CD4-positive, alpha-beta memory T cell (primary cell): ENCODE measurements at regions of chr16 and their contacts with region 1.

Region 1: DNA sequence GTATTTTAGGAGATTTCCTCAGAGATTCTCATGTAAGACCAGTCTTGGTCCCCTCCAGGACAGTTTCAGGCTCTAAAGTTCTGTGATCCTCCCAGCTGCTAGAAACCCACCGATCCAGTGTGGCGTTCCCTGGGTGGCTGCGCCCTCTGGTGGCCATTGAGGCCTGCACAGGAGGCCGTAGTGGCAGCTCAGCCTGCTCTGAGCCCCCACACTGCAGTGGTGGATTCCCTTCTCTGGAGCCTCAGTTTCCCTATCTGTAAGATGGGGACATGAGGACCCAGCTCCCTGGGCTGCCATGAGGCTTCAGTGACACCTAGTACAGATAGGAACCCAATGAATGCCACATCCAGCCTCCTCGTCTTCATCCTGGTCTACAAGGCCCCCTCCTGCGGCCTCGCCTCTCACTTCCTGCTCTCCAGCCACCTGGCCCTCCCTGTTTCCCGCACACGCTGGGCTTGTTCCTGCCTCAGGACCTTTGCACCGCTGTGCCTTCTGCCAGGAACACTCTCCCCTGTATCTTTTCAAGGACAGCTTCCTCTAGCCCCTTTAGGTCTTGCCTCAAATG is 16.5 kb downstream of the CCDC102A start:
- DNase-seq: peak; percentile 70 to 76 (median 72)
- H3K4me3 ChIP-seq: no peak overlapping the region
- H3K4me3 Mint-ChIP-seq: no peak overlapping the region
- H3K27ac ChIP-seq: no peak overlapping the region
- H3K27ac Mint-ChIP-seq: peak overlapping the region in 1 of 7 donors; percentile 2
- H3K4me1 ChIP-seq: no peaks in the 10 kb centered on the region
- H3K4me1 Mint-ChIP-seq: peaks cover 0 to 6% (median 3%) of the 10 kb centered on the region in 4 donors
- H3K27me3 ChIP-seq: no peaks in the 10 kb centered on the region
- H3K27me3 Mint-ChIP-seq: no peaks in the 10 kb centered on the region

Region 2: DNA sequence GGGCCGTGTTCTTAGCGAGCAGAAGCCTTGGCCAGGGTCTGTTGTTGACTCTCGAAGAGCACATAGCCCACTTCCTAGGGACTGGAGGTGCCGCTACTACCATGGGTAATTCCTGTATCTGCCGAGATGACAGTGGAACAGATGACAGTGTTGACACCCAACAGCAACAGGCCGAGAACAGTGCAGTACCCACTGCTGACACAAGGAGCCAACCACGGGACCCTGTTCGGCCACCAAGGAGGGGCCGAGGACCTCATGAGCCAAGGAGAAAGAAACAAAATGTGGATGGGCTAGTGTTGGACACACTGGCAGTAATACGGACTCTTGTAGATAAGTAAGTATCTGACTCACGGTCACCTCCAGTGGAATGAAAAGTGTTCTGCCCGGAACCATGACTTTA is 315.2 kb before region 1 on chr16:
- CTCF ChIA-PET with region 1: no interaction called
- POLR2A ChIA-PET with region 1: no interaction called
- intact Hi-C with region 1: no loop called
- DNase-seq: no peak
- H3K4me3 ChIP-seq: no peak overlapping the region
- H3K4me3 Mint-ChIP-seq: no peak overlapping the region
- H3K27ac ChIP-seq: no peak overlapping the region
- H3K27ac Mint-ChIP-seq: no peak overlapping the region
- H3K4me1 ChIP-seq: no peaks in the 10 kb centered on the region
- H3K4me1 Mint-ChIP-seq: peaks cover 0 to 7% (median 5%) of the 10 kb centered on the region in 4 donors
- H3K27me3 ChIP-seq: no peaks in the 10 kb centered on the region
- H3K27me3 Mint-ChIP-seq: no peaks in the 10 kb centered on the region

Region 3: DNA sequence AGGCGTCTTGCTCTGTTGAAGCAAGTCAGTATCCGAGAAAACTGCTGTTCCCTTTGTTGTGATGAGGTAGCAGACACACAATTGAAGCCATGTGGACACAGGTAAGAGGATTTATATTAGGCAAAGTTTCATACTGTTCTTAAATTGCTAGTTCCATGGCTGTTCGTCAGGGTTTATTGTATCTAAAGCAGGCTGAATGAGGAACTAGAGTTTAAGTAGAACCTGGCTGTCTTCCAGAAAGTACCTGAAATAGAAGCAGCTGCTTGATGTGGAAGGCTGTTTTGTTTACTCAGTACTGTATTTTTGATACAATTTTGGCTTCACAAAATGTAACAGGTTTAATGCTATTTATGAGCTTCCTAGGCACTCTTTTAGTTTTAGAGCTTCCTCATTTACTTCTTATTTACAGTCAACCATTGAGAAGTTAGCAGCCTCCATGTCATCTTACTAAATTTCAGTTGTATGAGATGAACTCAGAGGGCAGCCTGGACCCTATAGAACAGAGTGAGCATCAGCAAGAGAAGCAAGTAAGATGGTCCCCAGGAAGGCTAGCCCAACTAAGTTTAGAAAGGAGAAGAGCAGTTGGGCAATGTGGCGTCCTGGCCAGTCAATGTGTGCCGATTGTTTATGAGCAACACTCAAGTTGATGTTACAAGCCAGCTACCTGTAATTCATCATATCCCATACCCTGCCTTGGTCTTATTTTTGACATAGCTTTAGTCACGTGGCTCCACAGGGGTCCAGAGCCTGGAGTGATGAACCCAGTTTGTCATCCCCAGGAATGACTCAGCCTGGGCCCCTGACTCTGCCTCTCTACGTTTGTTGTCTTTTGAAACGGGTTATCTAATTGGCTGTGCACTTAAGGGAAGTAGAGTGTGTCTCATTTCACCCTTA is 284.5 kb before region 1 on chr16:
- CTCF ChIA-PET with region 1: no interaction called
- POLR2A ChIA-PET with region 1: no interaction called
- intact Hi-C with region 1: no loop called
- DNase-seq: no peak
- H3K4me3 ChIP-seq: no peak overlapping the region
- H3K4me3 Mint-ChIP-seq: no peak overlapping the region
- H3K27ac ChIP-seq: no peak overlapping the region
- H3K27ac Mint-ChIP-seq: peak overlapping the region in 4 of 7 donors; percentile 14 to 46 (median 28)
- H3K4me1 ChIP-seq: no peaks in the 10 kb centered on the region
- H3K4me1 Mint-ChIP-seq: no peaks in the 10 kb centered on the region
- H3K27me3 ChIP-seq: no peaks in the 10 kb centered on the region
- H3K27me3 Mint-ChIP-seq: no peaks in the 10 kb centered on the region

Region 4: DNA sequence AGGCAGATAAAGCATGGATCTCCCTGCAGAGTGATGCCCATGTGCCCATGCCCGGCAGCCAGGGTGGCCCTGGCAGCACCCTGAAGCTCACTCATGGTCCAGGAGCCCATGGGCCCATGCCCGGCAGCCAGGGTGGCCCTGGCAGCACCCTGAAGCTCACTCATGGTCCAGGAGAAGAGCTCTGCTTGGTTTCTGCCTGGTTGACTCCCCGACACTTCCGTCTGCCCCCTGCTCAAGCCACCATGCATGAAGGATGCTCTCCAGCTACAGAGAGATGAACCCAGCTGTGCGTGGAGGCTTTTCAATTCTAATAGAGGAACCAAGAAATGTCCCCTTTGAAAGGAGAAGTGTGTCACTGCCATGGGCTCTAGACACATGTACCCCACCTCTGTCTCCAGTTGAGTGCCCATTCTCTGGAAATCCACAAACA is 106.6 kb before region 1 on chr16:
- CTCF ChIA-PET with region 1: interaction called, 87 read pairs
- POLR2A ChIA-PET with region 1: interaction called, 3 read pairs
- intact Hi-C with region 1: no loop called
- DNase-seq: no peak
- H3K4me3 ChIP-seq: no peak overlapping the region
- H3K4me3 Mint-ChIP-seq: no peak overlapping the region
- H3K27ac ChIP-seq: no peak overlapping the region
- H3K27ac Mint-ChIP-seq: no peak overlapping the region
- H3K4me1 ChIP-seq: peaks cover 7% of the 10 kb centered on the region
- H3K4me1 Mint-ChIP-seq: peaks cover 6 to 13% (median 7%) of the 10 kb centered on the region in 4 donors
- H3K27me3 ChIP-seq: no peaks in the 10 kb centered on the region
- H3K27me3 Mint-ChIP-seq: peaks cover 1 to 6% of the 10 kb centered on the region in 2 donors

Region 5: GRCh38 chr16:57462209-57462977 is 57.5 kb before region 1 on chr16 and contains the start of gene POLR2C:
- CTCF ChIA-PET with region 1: interaction called, 10 read pairs
- POLR2A ChIA-PET with region 1: interaction called, 8 read pairs
- intact Hi-C with region 1: loop called (anchors 5 kb)
- DNase-seq: peak; percentile 89 to 93 (median 90)
- H3K4me3 ChIP-seq: peak within 1 kb of the TSS; percentile 81 to 87
- H3K4me3 Mint-ChIP-seq: peak within 1 kb of the TSS; percentile 98 to 100 (median 100)
- H3K27ac ChIP-seq: peak within 1 kb of the TSS; percentile 69
- H3K27ac Mint-ChIP-seq: peak within 1 kb of the TSS; percentile 96 to 100 (median 99)
- H3K4me1 ChIP-seq: peaks cover 36% of the 10 kb centered on the region
- H3K4me1 Mint-ChIP-seq: peaks cover 16 to 43% (median 34%) of the 10 kb centered on the region in 4 donors
- H3K27me3 ChIP-seq: no peaks in the 10 kb centered on the region
- H3K27me3 Mint-ChIP-seq: no peaks in the 10 kb centered on the region
- total RNA-seq, gene POLR2C: 71.4 to 78.1 TPM

Region 6: GRCh38 chr16:57475711-57476339 is 44.1 kb before region 1 on chr16:
- CTCF ChIA-PET with region 1: interaction called, 14 read pairs
- POLR2A ChIA-PET with region 1: no interaction called
- intact Hi-C with region 1: loop called (anchors 1 kb)
- DNase-seq: peak; percentile 66 to 82 (median 75)
- H3K4me3 ChIP-seq: no peak overlapping the region
- H3K4me3 Mint-ChIP-seq: peak overlapping the region in 5 of 8 donors; percentile 5 to 69 (median 59)
- H3K27ac ChIP-seq: no peak overlapping the region
- H3K27ac Mint-ChIP-seq: peak overlapping the region in 4 of 7 donors; percentile 74 to 79 (median 76)
- H3K4me1 ChIP-seq: peaks cover 17% of the 10 kb centered on the region
- H3K4me1 Mint-ChIP-seq: peaks cover 7 to 12% (median 10%) of the 10 kb centered on the region in 4 donors
- H3K27me3 ChIP-seq: no peaks in the 10 kb centered on the region
- H3K27me3 Mint-ChIP-seq: no peaks in the 10 kb centered on the region

Region 7: DNA sequence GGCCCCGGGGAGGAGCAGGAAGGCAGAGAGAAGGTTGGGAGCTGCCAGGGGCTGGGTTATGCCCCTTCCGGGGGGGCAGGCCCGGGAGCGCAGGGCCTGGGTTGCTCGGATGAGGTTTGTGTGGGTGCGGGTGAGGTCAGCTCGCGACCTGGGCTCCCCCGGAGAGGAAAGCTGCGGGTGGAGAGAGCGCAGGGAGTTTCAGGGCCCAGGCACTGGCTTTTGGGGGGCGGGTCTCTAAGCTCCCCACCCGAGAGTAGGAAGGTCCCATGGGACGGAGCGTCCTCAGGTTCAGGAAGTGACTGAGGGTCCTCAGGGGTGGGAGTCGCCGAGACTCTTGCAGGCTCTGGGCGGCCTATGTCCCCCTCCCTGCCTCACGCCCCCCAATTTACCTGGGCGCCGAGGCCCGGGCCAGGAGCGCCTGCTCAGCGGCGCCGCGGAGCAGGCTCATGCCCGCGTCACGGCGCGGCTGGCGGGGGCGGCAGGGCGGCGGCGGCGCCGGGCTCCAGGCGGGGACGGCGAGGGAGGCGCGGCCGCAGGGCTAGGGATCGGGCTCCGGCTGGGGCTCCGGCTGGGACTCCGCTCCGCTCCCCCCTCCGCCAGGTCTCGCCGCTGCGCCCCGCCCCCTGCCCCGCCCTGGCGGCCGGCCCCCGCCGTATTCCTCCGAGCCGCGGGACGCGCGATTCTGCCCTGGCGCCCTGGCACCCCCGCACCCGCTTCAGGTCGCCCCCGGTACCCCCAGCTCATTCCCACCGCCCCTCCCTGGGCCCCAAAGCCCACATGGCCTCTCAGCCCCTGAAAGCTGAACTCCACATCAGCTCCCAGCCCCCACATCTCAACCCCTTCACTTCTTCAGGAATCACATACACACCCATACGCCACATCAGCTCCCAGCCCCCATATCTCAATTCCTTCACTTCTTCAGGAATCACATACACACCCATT is 33.7 kb before region 1 on chr16 and contains the start of gene DOK4:
- CTCF ChIA-PET with region 1: interaction called, 22 read pairs
- POLR2A ChIA-PET with region 1: no interaction called
- intact Hi-C with region 1: no loop called
- DNase-seq: peak; percentile 65 to 72 (median 69)
- H3K4me3 ChIP-seq: peak within 1 kb of the TSS in 1 of 2 donors; percentile 55
- H3K4me3 Mint-ChIP-seq: peak within 1 kb of the TSS; percentile 82 to 90 (median 86)
- H3K27ac ChIP-seq: peak within 1 kb of the TSS; percentile 36
- H3K27ac Mint-ChIP-seq: peak within 1 kb of the TSS in 5 of 7 donors; percentile 44 to 81 (median 77)
- H3K4me1 ChIP-seq: peaks cover 17% of the 10 kb centered on the region
- H3K4me1 Mint-ChIP-seq: peaks cover 11 to 27% (median 21%) of the 10 kb centered on the region in 4 donors
- H3K27me3 ChIP-seq: no peaks in the 10 kb centered on the region
- H3K27me3 Mint-ChIP-seq: no peaks in the 10 kb centered on the region
- total RNA-seq, gene DOK4: 2.8 to 3.0 TPM

Region 8: GRCh38 chr16:57530104-57530521 is 10.2 kb after region 1 on chr16:
- CTCF ChIA-PET with region 1: interaction called, 28 read pairs
- POLR2A ChIA-PET with region 1: interaction called, 15 read pairs
- intact Hi-C with region 1: no loop called
- DNase-seq: peak; percentile 59 to 90 (median 63)
- H3K4me3 ChIP-seq: peak overlapping the region in 1 of 2 donors; percentile 42
- H3K4me3 Mint-ChIP-seq: peak overlapping the region; percentile 67 to 89 (median 82)
- H3K27ac ChIP-seq: peak overlapping the region; percentile 60
- H3K27ac Mint-ChIP-seq: peak overlapping the region; percentile 92 to 97 (median 96)
- H3K4me1 ChIP-seq: peaks cover 59% of the 10 kb centered on the region
- H3K4me1 Mint-ChIP-seq: peaks cover 49 to 60% (median 54%) of the 10 kb centered on the region in 4 donors
- H3K27me3 ChIP-seq: no peaks in the 10 kb centered on the region
- H3K27me3 Mint-ChIP-seq: no peaks in the 10 kb centered on the region

Region 9: GRCh38 chr16:57535680-57536305 is 15.9 kb after region 1 on chr16:
- CTCF ChIA-PET with region 1: interaction called, 28 read pairs
- POLR2A ChIA-PET with region 1: interaction called, 15 read pairs
- intact Hi-C with region 1: no loop called
- DNase-seq: peak; percentile 89 to 95 (median 93)
- H3K4me3 ChIP-seq: peak overlapping the region in 1 of 2 donors; percentile 51
- H3K4me3 Mint-ChIP-seq: peak overlapping the region; percentile 80 to 91 (median 83)
- H3K27ac ChIP-seq: peak overlapping the region; percentile 92
- H3K27ac Mint-ChIP-seq: peak overlapping the region; percentile 96 to 99 (median 98)
- H3K4me1 ChIP-seq: peaks cover 76% of the 10 kb centered on the region
- H3K4me1 Mint-ChIP-seq: peaks cover 60 to 76% (median 69%) of the 10 kb centered on the region in 4 donors
- H3K27me3 ChIP-seq: no peaks in the 10 kb centered on the region
- H3K27me3 Mint-ChIP-seq: no peaks in the 10 kb centered on the region